ENCODE measurements at regions of chr5 and their contacts with region 1.

Region 1: GRCh38 chr5:97162045-97162444 is 19.6 kb upstream of the LIX1 start:
- DNase-seq: peak; percentile 16
- H3K4me3 ChIP-seq: no peak overlapping the region
- CTCF ChIP-seq: peak; percentile 72

Region 2: DNA sequence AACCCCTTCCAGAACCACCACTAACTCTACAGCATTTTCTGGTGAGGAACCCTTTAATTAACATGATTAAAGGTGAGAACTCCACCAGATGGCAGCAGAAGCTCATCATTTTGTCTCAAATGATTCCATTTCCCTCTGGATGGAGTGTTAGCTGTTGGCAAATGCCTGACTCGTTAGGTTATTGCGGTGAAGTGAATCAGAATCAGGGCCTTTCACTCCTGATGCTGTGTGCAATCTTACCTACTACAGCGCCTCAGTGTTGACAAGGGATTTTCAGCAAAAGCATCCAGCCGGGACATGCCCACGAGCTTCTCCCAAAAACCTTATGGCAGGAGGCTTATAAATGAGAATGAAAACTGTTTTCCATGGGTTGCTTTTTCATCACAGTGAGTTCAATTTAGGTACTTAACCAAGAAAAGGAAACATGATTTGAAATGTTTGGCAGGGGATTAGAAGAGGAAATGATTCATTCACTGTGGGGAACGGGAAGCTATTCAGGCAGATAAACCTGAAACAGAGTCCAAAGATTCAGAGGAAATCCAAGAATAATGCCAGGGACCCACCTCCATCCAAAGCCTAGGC is 547.8 kb before region 1 on chr5:
- CTCF ChIA-PET with region 1: interaction called, 18 read pairs
- POLR2A ChIA-PET with region 1: interaction called, 3 read pairs
- DNase-seq: peak; percentile 74
- H3K4me3 ChIP-seq: no peak overlapping the region; the same call in 1 of the 2 replicates
- CTCF ChIP-seq: peak; percentile 24

Region 3: GRCh38 chr5:96763026-96763425 is 399.0 kb before region 1 on chr5:
- CTCF ChIA-PET with region 1: interaction called, 35 read pairs
- POLR2A ChIA-PET with region 1: no interaction called
- DNase-seq: no peak
- H3K4me3 ChIP-seq: no peak overlapping the region
- CTCF ChIP-seq: no peak

Region 4: GRCh38 chr5:96868603-96869371 is 293.3 kb before region 1 on chr5:
- CTCF ChIA-PET with region 1: interaction called, 194 read pairs
- POLR2A ChIA-PET with region 1: no interaction called
- DNase-seq: peak; percentile 42
- H3K4me3 ChIP-seq: no peak overlapping the region
- CTCF ChIP-seq: peak; percentile 92

Region 5: GRCh38 chr5:97002983-97003382 is 159.1 kb before region 1 on chr5:
- CTCF ChIA-PET with region 1: interaction called, 113 read pairs
- POLR2A ChIA-PET with region 1: no interaction called
- DNase-seq: no peak
- H3K4me3 ChIP-seq: no peak overlapping the region
- CTCF ChIP-seq: no peak

Region 6: DNA sequence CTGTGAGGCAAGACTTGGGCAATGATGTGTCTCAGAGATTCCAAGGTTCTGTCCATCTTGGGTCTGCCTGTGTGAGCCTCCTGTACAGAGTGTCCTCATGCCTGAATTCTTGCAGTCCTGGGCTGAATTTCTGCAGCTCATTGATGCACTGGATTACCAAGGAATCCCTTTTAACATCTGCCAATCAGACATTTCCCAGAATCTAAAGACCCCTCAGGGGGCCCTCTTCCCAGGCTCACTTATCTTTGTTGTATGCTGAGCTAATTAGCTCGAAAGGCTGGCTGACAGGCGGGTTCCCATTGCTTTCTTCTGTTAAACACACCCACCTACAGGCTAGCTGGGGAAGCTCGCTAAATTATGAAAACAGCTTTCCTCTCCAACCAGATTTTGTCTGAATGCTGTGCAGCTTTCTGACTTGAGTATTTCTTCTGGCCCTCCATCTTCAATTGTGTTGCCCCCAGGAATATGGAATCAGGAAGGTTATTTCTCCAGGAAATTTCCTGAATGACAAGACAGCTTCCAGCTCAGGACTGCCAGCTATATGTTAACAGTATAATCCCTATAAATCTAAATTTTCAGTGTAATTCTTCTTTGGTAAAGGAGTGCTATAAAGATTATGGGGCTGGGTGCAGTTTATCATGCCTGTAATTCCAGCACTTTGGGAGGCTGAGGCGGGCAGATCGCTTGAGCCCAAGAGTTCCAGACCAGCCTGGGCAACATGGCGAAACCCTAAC is 19.4 kb before region 1 on chr5 and contains the start of gene LIX1:
- CTCF ChIA-PET with region 1: interaction called, 54 read pairs
- POLR2A ChIA-PET with region 1: no interaction called
- DNase-seq: no peak
- H3K4me3 ChIP-seq: no peak within 1 kb of the TSS
- CTCF ChIP-seq: peak; percentile 40

Region 7: GRCh38 chr5:97181856-97182545 is 20.0 kb after region 1 on chr5:
- CTCF ChIA-PET with region 1: interaction called, 16 read pairs
- POLR2A ChIA-PET with region 1: no interaction called
- DNase-seq: no peak
- H3K4me3 ChIP-seq: peak overlapping the region; percentile 74
- CTCF ChIP-seq: no peak

Region 8: DNA sequence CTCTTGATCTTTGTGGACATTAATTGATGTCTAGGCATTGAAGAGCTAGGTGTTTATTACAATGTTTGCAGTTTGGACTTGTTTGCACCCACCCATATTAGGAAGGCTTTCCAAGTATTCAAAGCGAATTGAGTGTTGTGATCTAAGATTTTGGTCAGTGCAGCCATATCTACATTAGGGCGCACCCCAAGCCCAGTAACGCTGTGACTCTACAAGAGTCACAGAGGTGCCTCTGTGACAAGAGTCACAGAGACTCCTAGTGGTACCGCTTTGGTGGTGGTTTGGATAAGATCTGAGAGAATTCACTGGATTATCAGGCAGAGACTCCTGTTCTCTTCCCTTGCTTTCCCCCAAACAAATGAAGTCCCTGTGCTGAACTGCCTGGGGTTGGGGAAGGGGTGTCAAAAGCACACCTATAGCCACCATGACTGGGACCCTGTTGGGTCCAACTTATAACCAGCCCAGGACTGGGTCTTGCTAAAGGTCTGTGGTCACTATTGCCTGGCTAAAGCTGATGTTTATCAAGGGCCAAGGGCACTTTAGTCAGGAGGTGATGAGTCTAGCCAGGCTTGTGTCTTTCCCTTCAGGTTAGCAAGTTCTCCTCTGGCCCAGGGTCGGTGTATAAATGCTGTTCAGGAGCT is 135.1 kb after region 1 on chr5:
- CTCF ChIA-PET with region 1: no interaction called
- POLR2A ChIA-PET with region 1: no interaction called
- DNase-seq: no peak
- H3K4me3 ChIP-seq: no peak overlapping the region
- CTCF ChIP-seq: peak; percentile 18